ENCODE measurements at regions of chr6 and their contacts with region 1.

Region 1: DNA sequence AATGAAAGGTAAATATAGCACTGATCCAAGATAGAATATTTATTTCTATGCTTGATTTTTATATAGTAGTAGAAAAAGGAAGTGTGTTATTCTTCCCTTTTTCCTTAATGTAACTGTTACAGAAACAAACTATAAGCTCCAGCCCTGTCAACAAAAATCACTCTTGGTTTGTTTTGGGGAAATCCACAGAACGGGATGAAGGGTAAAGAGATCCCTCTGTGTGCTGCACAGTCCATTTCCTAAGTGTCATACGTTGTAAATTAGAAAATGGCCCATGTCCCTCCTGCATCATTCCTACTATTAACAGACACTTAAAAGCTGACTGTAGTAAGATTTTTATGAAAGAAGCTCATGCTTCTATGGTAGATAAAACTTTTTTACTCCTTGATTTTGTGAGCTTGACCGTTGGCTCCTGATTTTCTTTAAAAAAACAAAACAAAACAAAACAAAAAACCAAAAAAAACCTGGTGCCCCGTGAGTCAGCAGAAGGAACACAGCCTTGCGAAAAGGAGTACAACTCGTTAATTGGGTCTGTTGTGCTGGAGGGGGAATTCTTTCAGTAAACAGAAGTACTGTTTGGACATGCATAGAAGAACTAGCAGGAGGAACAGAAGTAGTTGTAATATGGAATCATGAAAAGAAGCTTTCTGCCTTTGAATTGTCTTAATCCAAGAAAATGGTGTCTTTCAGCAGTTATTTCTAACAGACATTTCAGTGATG is 67.5 kb downstream of the RTN4IP1 start:
- DNase-seq: no peak
- H3K4me3 ChIP-seq: no peak overlapping the region
- H3K4me3 Mint-ChIP-seq: no peak overlapping the region
- H3K27ac ChIP-seq: no peak overlapping the region
- H3K27ac Mint-ChIP-seq: peak overlapping the region in 5 of 8 donors; percentile 12 to 86 (median 27)
- H3K4me1 ChIP-seq: no peaks in the 10 kb centered on the region
- H3K4me1 Mint-ChIP-seq: peaks cover 0 to 5% (median 2%) of the 10 kb centered on the region in 3 donors
- H3K27me3 ChIP-seq: no peaks in the 10 kb centered on the region
- H3K27me3 Mint-ChIP-seq: no peaks in the 10 kb centered on the region

Region 2: GRCh38 chr6:106519460-106520394 is 42.1 kb before region 1 on chr6:
- CTCF ChIA-PET with region 1: interaction called, 53 read pairs
- POLR2A ChIA-PET with region 1: interaction called, 7 read pairs
- DNase-seq: peak; percentile 53 to 87 (median 78)
- H3K4me3 ChIP-seq: peak overlapping the region; percentile 71
- H3K4me3 Mint-ChIP-seq: peak overlapping the region; percentile 90 to 95 (median 93)
- H3K27ac ChIP-seq: peak overlapping the region; percentile 83
- H3K27ac Mint-ChIP-seq: peak overlapping the region; percentile 96 to 99 (median 98)
- H3K4me1 ChIP-seq: peaks cover 51% of the 10 kb centered on the region
- H3K4me1 Mint-ChIP-seq: peaks cover 69 to 90% (median 88%) of the 10 kb centered on the region in 3 donors
- H3K27me3 ChIP-seq: no peaks in the 10 kb centered on the region
- H3K27me3 Mint-ChIP-seq: no peaks in the 10 kb centered on the region

Region 3: GRCh38 chr6:108243836-108244235 is 1682.0 kb after region 1 on chr6:
- CTCF ChIA-PET with region 1: no interaction called
- POLR2A ChIA-PET with region 1: interaction called, 17 read pairs
- DNase-seq: no peak
- H3K4me3 ChIP-seq: no peak overlapping the region
- H3K4me3 Mint-ChIP-seq: no peak overlapping the region
- H3K27ac ChIP-seq: no peak overlapping the region
- H3K27ac Mint-ChIP-seq: peak overlapping the region in 1 of 8 donors; percentile 42
- H3K4me1 ChIP-seq: no peaks in the 10 kb centered on the region
- H3K4me1 Mint-ChIP-seq: peaks cover 45 to 68% (median 67%) of the 10 kb centered on the region in 3 donors
- H3K27me3 ChIP-seq: no peaks in the 10 kb centered on the region
- H3K27me3 Mint-ChIP-seq: no peaks in the 10 kb centered on the region

Measured in CD8-positive, alpha-beta memory T cell (primary cell).